Caco-2 (cell line): ENCODE measurements at regions of chr1 and their contacts with region 1.

Region 1: GRCh38 chr1:207470927-207471326 is 16.8 kb downstream of the CR2 start:
- DNase-seq: no peak
- H3K4me3 ChIP-seq: no peak overlapping the region
- H3K4me3 Mint-ChIP-seq: no peak overlapping the region
- H3K27ac Mint-ChIP-seq: no peak overlapping the region
- H3K4me1 ChIP-seq: no peaks in the 10 kb centered on the region
- H3K4me1 Mint-ChIP-seq: no peaks in the 10 kb centered on the region
- H3K27me3 ChIP-seq: no peaks in the 10 kb centered on the region
- H3K27me3 Mint-ChIP-seq: peaks cover 20% of the 10 kb centered on the region
- CTCF ChIP-seq: no peak

Region 2: DNA sequence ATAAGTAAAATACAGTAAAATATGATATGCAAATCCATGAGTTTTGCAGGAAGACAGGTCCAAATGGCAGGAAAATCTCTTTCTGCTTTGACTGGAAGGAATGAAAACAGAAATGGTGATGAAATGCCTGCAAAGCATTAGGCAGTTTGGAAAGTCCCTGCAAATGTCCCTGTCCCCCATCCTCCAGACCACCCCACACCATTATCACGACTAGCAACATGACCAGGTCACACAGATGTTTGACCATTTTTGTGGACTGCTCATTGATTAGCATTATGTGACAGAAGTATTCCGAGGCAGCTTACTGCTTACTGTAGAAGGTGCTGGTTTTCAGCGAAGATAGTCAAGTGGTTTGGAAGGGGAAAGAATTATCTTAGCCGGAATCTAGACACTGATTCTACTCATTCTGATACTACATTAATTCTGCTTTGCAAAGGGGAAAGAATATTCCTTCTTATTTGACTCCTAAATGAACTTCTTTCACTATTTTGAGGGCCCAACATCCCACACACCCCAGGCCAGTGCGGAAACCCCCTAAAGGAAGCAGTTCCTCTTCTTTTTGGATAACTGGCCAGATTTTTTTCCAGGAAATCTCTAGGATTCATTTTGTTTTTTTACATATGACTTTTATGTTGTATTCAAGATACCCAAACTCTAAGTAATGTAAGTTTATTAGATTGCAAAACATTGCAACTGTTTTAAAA is 26.3 kb before region 1 on chr1:
- CTCF ChIA-PET with region 1: no interaction called
- POLR2A ChIA-PET with region 1: interaction called, 11 read pairs
- intact Hi-C with region 1: no loop called
- DNase-seq: no peak
- H3K4me3 ChIP-seq: no peak overlapping the region
- H3K4me3 Mint-ChIP-seq: no peak overlapping the region
- H3K27ac Mint-ChIP-seq: no peak overlapping the region
- H3K4me1 ChIP-seq: no peaks in the 10 kb centered on the region
- H3K4me1 Mint-ChIP-seq: no peaks in the 10 kb centered on the region
- H3K27me3 ChIP-seq: no peaks in the 10 kb centered on the region
- H3K27me3 Mint-ChIP-seq: peaks cover 34% of the 10 kb centered on the region
- CTCF ChIP-seq: no peak